ENCODE measurements at regions of chr11 and their contacts with region 1.

Region 1: GRCh38 chr11:554824-555472 is 5.6 kb downstream of the LMNTD2 start:
- DNase-seq: no peak
- ATAC-seq: peak; percentile 68
- H3K4me3 ChIP-seq: peak overlapping the region; percentile 57 to 59
- H3K27ac ChIP-seq: peak overlapping the region; percentile 66
- H3K4me1 ChIP-seq: peaks cover 26% of the 10 kb centered on the region
- H3K27me3 ChIP-seq: no peaks in the 10 kb centered on the region
- CTCF ChIP-seq: no peak; the same call in 1 of the 2 replicates

Region 2: DNA sequence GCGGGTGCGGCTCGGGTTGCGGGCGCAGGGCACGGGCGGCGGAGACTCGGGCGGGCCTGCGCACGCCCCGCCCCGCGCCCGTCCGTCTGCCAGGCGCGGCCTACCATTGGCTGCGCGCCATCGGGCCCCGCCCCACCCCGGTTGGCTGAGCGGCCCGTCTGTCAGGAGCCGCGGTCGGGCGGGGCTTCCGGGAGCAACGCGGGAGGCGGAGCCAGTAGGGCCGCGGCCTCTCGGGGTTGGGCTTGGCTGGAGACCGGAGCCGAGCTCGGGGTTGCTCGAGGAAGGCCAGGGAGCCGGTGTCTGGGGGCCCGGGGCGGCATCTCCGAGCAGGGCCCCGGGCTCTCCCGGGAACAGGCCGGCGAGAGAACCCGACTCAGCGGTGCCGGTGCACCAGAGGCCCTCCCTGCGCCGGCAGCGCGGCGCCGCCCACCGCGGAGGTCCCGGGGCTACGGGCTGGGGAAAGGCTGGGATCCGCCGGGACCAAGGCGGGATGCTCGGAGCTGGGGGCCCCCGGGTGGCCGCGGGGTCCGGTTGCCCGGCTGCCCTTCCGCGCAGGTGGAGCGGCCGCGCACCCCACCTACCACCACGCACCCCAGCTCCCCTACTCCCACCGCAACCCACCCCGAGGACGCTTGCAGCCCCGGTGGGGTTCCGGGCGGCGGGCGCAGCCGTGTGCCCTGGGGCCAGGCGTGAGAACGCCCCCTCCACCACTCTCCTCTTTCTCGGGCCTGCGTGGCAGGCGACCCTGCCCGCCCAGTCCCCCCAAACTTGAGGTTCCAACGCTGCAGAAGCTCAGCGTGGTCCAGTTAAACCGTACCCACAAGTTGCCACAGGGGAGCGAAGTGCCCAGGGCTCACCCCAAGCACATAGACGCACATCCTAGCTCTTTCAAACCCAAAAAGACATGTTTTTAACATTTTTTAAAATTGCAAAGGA is 19.2 kb before region 1 on chr11 and contains the start of gene HRAS:
- CTCF ChIA-PET with region 1: interaction called, 3 read pairs
- POLR2A ChIA-PET with region 1: interaction called, 11 read pairs
- in situ Hi-C with region 1: no loop called
- intact Hi-C with region 1: no loop called
- DNase-seq: peak; percentile 68
- ATAC-seq: peak; percentile 83
- H3K4me3 ChIP-seq: peak within 1 kb of the TSS; percentile 69 to 90
- H3K27ac ChIP-seq: peak within 1 kb of the TSS; percentile 79
- H3K4me1 ChIP-seq: peaks cover 35% of the 10 kb centered on the region
- H3K27me3 ChIP-seq: no peaks in the 10 kb centered on the region
- CTCF ChIP-seq: no peak
- total RNA-seq, gene HRAS: 175 TPM

Measured in Panc1 (cell line).